GM12878 (cell line): ENCODE measurements at regions of chr4 and their contacts with region 1.

Region 1: DNA sequence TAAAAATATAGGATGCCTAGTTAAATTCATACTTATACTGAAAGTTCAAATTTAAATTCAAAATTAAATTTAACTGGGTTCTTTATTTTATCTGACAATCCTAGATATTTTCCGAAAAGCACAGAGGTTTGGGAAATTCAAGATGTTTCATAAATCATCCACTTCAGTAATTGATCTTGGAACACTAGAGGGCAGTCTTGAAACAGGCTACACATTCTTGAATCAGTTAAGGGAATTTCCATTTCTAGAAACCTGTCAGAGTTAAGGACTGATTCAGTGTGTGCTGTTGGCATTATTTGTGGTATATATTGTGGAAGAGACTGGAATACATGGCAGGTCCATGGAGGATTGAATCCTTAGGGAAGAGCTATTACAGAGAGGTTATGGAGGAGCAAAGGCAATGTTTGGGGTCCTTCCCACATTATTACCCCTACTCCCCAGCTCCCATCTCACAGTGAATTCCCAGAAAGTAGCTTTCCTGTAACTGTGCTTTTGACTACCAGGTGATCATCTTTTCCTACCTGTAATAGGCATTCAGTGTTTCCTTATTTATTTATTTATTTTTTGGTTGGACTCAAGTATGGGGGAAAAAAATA is 92.9 kb downstream of the EGF start:
- DNase-seq: peak; percentile 43
- ATAC-seq: peak; percentile 91
- H3K4me3 ChIP-seq: no peak overlapping the region
- H3K27ac ChIP-seq: no peak overlapping the region
- H3K4me1 ChIP-seq: peaks cover 4% of the 10 kb centered on the region; the same call in 1 of the 2 replicates
- H3K27me3 ChIP-seq: no peaks in the 10 kb centered on the region
- CTCF ChIP-seq: peak; percentile 58 to 91 (median 62); a peak in 4 of 6 replicates
- EP300 ChIP-seq: no peak
- POLR2A ChIP-seq: no peak
- RAD21 ChIP-seq: peak; percentile 98

Region 2: GRCh38 chr4:109359040-109359646 is 646.4 kb before region 1 on chr4:
- CTCF ChIA-PET with region 1: no interaction called
- POLR2A ChIA-PET with region 1: no interaction called
- RAD21 ChIA-PET with region 1: no interaction called
- SMC1A ChIA-PET with region 1: no interaction called
- in situ Hi-C with region 1: no loop called
- intact Hi-C with region 1: no loop called
- DNase-seq: peak; percentile 19
- ATAC-seq: peak; percentile 57; the same call in 2 of the 3 replicates
- H3K4me3 ChIP-seq: no peak overlapping the region
- H3K27ac ChIP-seq: no peak overlapping the region
- H3K4me1 ChIP-seq: no peaks in the 10 kb centered on the region
- H3K27me3 ChIP-seq: no peaks in the 10 kb centered on the region
- CTCF ChIP-seq: no peak
- EP300 ChIP-seq: no peak
- POLR2A ChIP-seq: no peak
- RAD21 ChIP-seq: no peak

Region 3: GRCh38 chr4:109967797-109968507 is 37.6 kb before region 1 on chr4:
- CTCF ChIA-PET with region 1: no interaction called
- POLR2A ChIA-PET with region 1: no interaction called
- RAD21 ChIA-PET with region 1: no interaction called
- SMC1A ChIA-PET with region 1: no interaction called
- in situ Hi-C with region 1: no loop called
- intact Hi-C with region 1: no loop called
- DNase-seq: no peak
- ATAC-seq: peak; percentile 74
- H3K4me3 ChIP-seq: no peak overlapping the region
- H3K27ac ChIP-seq: no peak overlapping the region
- H3K4me1 ChIP-seq: no peaks in the 10 kb centered on the region
- H3K27me3 ChIP-seq: peaks cover 0 to 3% of the 10 kb centered on the region in 2 experiments; a peak in 2 of 4 replicates
- CTCF ChIP-seq: no peak
- EP300 ChIP-seq: no peak
- POLR2A ChIP-seq: no peak
- RAD21 ChIP-seq: no peak

Region 4: GRCh38 chr4:110034026-110034393 is 28.5 kb after region 1 on chr4:
- CTCF ChIA-PET with region 1: interaction called, 6 read pairs
- POLR2A ChIA-PET with region 1: interaction called, 3 read pairs
- RAD21 ChIA-PET with region 1: interaction called, 3 read pairs
- SMC1A ChIA-PET with region 1: interaction called, 12 read pairs
- in situ Hi-C with region 1: no loop called
- intact Hi-C with region 1: no loop called
- DNase-seq: peak; percentile 63
- ATAC-seq: peak; percentile 99
- H3K4me3 ChIP-seq: no peak overlapping the region
- H3K27ac ChIP-seq: no peak overlapping the region
- H3K4me1 ChIP-seq: peaks cover 14% of the 10 kb centered on the region
- H3K27me3 ChIP-seq: no peaks in the 10 kb centered on the region
- CTCF ChIP-seq: no peak
- EP300 ChIP-seq: peak; percentile 58 to 77; a peak in 3 of 4 replicates
- POLR2A ChIP-seq: no peak
- RAD21 ChIP-seq: no peak

Region 5: DNA sequence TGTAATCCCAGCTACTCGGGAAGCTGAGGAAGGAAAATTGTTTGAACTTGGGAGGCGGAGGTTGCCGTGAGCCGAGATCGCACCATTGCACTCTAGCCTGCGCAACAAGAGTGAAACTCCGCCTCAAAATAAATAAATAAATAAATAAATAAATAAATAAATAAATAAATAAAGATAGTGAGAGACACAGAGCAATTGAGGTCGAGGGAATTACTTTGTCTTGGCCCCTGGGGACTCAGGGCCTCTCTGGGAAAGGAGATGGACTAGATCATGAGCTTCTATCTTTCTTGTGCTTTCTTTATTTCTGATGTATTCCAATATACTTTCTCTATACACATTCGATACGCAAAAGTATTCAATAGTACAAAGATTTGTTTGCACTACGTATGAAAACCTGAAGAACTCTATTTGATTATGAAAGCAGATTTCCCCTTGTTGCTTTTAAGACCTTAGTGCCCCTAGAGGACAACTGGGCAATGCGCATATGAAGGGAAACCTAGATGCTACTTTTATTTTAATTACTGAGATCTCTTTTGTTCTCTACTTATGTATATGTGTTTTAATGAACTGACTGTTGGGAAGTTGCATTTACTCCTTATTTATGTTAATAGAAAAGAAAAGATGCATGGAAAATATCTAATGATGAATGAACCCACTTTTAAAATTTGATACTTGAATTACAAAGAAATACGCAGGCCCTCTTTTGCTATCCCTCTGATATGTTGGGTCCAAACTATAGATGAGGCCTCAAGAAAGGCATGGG is 205.6 kb after region 1 on chr4:
- CTCF ChIA-PET with region 1: interaction called, 10 read pairs
- POLR2A ChIA-PET with region 1: interaction called, 3 read pairs
- RAD21 ChIA-PET with region 1: interaction called, 5 read pairs
- SMC1A ChIA-PET with region 1: interaction called, 7 read pairs
- in situ Hi-C with region 1: no loop called
- intact Hi-C with region 1: loop called (anchors 1 kb)
- DNase-seq: no peak
- ATAC-seq: peak; percentile 94
- H3K4me3 ChIP-seq: no peak overlapping the region
- H3K27ac ChIP-seq: no peak overlapping the region
- H3K4me1 ChIP-seq: no peaks in the 10 kb centered on the region
- H3K27me3 ChIP-seq: no peaks in the 10 kb centered on the region
- CTCF ChIP-seq: peak; percentile 71 to 80 (median 75)
- EP300 ChIP-seq: no peak
- POLR2A ChIP-seq: no peak
- RAD21 ChIP-seq: peak; percentile 86

Region 6: GRCh38 chr4:110296892-110297291 is 291.3 kb after region 1 on chr4:
- CTCF ChIA-PET with region 1: interaction called, 3 read pairs
- POLR2A ChIA-PET with region 1: no interaction called
- RAD21 ChIA-PET with region 1: no interaction called
- SMC1A ChIA-PET with region 1: interaction called, 12 read pairs
- in situ Hi-C with region 1: no loop called
- intact Hi-C with region 1: no loop called
- DNase-seq: peak; percentile 38
- ATAC-seq: peak; percentile 97
- H3K4me3 ChIP-seq: no peak overlapping the region
- H3K27ac ChIP-seq: no peak overlapping the region
- H3K4me1 ChIP-seq: peaks cover 9% of the 10 kb centered on the region
- H3K27me3 ChIP-seq: peaks cover 0 to 4% of the 10 kb centered on the region in 2 experiments; a peak in 1 of 4 replicates
- CTCF ChIP-seq: no peak
- EP300 ChIP-seq: peak; percentile 54 to 75; a peak in 3 of 4 replicates
- POLR2A ChIP-seq: no peak
- RAD21 ChIP-seq: no peak

Region 7: DNA sequence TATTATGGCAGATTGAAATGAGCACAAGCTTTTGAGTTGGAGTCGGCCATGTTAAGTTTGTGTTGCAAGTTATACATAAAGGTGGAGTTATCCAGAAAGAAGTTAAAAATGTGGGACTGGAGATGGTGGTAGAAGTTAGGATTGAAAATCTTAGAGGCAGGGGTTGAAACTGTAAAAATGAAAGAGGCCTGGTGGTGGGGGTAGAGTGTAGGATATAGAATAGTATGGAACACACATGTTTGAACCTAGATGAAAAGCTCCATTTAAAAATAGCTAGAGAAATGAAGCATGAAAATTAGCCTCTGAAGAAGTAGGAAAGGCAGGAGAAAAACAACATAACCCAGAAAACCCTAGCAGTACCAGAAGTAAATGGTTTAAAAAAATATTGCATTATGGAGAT is 338.6 kb after region 1 on chr4:
- CTCF ChIA-PET with region 1: interaction called, 10 read pairs
- POLR2A ChIA-PET with region 1: no interaction called
- RAD21 ChIA-PET with region 1: interaction called, 8 read pairs
- SMC1A ChIA-PET with region 1: interaction called, 6 read pairs
- in situ Hi-C with region 1: no loop called
- intact Hi-C with region 1: no loop called
- DNase-seq: no peak
- ATAC-seq: no peak
- H3K4me3 ChIP-seq: no peak overlapping the region
- H3K27ac ChIP-seq: no peak overlapping the region
- H3K4me1 ChIP-seq: no peaks in the 10 kb centered on the region
- H3K27me3 ChIP-seq: 0 out of 4 replicates have a peak, but pooled peaks cover 0 to 2% of the 10 kb centered on the region in 2 experiments
- CTCF ChIP-seq: peak in 2 of 3 experiments; percentile 3 to 29; a peak in 2 of 6 replicates
- EP300 ChIP-seq: no peak
- POLR2A ChIP-seq: no peak
- RAD21 ChIP-seq: peak; percentile 60

Region 8: GRCh38 chr4:110516106-110516922 is 510.8 kb after region 1 on chr4:
- CTCF ChIA-PET with region 1: interaction called, 812 read pairs
- POLR2A ChIA-PET with region 1: no interaction called
- RAD21 ChIA-PET with region 1: interaction called, 52 read pairs
- SMC1A ChIA-PET with region 1: interaction called, 114 read pairs
- in situ Hi-C with region 1: no loop called
- intact Hi-C with region 1: loop called (anchors 1 kb)
- DNase-seq: peak; percentile 30
- ATAC-seq: peak; percentile 94
- H3K4me3 ChIP-seq: peak overlapping the region; percentile 64; the same call in 1 of the 2 replicates
- H3K27ac ChIP-seq: no peak overlapping the region; the same call in 1 of the 2 replicates
- H3K4me1 ChIP-seq: no peaks in the 10 kb centered on the region
- H3K27me3 ChIP-seq: no peaks in the 10 kb centered on the region
- CTCF ChIP-seq: peak; percentile 76 to 82 (median 82)
- EP300 ChIP-seq: no peak
- POLR2A ChIP-seq: no peak
- RAD21 ChIP-seq: peak; percentile 54